HEK293 (cell line): ENCODE measurements at regions of chr6 and their contacts with region 1.

Region 1: DNA sequence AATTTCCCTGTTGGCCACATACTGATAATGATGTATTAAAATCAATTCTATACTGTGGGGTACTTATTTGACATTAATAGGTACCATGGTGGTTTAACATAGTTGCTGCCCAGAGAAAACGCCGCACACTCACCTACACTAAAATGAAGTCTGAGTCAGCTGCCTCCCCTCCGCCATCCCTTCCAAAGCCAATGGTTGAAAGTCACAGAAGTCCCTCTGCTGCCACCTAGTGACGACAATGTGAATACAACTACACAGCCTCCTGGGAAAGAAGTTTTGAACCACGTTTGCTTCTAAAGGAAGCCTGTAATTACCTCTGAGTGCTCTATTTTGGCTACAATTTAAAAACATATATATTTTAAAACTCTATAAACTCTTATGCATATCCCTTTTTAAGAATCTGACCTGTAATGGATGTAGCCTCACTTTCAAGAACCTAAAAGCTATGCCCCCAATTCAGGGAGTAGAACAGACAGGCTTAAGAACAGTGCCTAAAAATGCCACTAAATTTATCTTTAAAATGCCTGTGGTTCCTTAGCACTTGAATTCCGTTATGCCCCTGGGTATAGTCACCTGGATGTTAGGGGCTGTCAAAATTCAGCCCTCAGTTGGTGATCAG is 20.6 kb upstream of the ECI2 start:
- H3K4me3 ChIP-seq: no peak overlapping the region
- H3K27ac ChIP-seq: no peak overlapping the region
- H3K4me1 ChIP-seq: no peaks in the 10 kb centered on the region
- CTCF ChIP-seq: peak; percentile 68

Region 2: DNA sequence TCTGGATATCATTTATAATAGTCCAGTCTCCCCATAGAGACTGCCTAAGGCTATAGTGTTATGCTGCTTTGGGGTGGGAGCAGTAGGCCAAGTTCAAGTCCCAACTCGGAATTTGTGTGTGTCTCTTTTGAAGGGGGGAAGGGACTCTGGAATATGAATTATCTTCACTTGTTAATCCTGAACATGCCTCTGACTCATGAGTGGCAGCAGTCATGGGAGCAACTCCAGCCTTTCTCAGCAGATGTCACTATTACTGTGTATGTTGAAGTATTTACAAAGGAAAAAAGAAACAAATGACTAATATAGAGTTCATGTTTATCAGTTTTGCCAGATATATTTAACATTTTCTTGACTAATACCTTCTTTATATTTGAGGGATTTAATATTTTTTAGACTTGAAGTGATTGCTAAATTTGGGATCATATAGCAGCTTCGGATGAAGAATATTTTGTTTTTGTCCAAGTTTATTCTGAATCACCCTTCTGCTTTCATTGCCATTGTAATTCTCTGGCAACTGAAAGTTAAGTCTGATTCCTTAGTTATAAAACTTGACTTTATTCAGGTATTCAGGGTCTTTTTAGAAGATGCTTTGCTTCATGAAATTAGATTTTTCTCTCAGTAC is 100.4 kb before region 1 on chr6:
- CTCF ChIA-PET with region 1: interaction called, 59 read pairs
- POLR2A ChIA-PET with region 1: no interaction called
- H3K4me3 ChIP-seq: no peak overlapping the region
- H3K27ac ChIP-seq: no peak overlapping the region
- H3K4me1 ChIP-seq: peaks cover 7% of the 10 kb centered on the region; the same call in 1 of the 2 replicates
- CTCF ChIP-seq: 0 out of 2 replicates have a peak, but pooled peaks have one; percentile 39

Region 3: DNA sequence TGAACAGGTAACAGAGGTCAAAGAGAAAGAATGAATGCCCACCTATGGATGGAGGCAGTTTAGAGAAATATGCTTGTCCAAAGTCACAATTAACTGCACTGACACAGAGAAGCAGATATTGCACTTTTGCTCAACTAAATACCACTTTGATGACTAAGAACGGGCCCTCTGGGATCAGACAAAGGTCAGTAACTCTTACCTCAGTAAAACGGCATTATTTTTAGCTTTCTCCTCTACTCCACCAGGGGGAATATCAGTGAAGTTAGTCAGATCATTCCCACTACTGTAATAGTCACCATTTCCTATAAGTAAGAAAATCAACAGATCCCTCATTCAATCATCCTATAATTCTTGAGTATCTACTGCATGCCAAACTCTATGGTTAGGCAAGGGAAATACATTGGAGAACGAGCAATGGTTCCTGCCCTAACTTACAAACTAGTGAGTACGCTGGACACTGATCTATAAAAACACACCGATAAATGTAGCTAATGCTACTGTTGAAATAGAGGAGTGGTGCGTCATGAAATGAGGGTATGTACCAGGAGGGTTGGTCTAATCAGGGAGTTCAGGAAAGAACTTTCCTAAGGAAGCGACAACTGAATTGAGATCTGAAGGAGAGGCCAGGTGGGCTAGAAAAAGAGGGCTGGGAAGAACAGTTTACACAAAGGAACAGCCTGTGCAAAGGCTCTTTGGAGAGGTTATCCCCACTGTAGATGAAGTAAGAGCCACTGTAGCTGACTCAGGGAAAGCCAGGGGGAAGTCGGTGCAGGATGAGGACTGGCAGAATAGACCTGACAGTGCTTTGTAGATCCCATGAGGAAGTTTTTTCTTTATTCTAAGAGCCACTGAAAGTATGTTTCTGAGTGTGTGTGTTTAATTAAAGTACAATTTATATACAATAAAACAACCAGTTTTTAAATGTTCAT is 29.8 kb before region 1 on chr6:
- CTCF ChIA-PET with region 1: interaction called, 24 read pairs
- POLR2A ChIA-PET with region 1: no interaction called
- H3K4me3 ChIP-seq: no peak overlapping the region
- H3K27ac ChIP-seq: no peak overlapping the region
- H3K4me1 ChIP-seq: no peaks in the 10 kb centered on the region
- CTCF ChIP-seq: no peak

Region 4: DNA sequence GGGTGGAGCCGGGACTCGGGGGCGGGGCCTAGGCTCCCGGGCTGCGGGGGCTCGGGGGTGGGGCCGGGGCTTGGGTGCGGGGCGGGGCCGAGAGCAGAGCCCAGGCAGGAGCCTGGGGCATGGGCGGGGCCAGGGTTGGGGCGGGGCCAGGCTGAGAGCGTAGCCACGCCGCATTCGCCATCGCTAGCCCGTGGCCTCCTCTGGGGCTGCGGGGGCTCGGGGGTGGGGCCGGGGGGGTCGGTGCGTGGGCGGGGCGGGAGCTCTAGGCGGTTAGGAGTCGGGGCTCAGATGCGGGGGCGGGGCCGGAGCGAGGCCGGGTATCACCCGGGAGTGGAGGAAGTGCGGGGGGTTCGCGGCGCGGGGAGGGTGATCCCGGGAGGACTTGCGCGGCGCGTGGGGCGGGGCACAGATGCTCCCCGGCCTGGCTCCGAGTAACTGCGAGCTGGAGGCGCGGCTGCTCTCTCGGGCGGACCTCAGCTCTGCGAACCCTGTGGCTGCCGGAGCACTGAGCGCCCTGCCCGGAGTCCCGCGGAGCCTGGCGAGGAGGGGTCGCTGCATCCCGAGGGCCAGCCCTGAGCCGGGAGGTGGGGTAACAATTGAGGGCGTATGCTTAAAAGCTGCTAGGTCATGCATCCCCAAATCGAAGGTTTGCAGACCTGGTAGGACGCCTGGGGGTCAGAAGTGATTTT is 20.1 kb before region 1 on chr6:
- CTCF ChIA-PET with region 1: interaction called, 21 read pairs
- POLR2A ChIA-PET with region 1: interaction called, 8 read pairs
- H3K4me3 ChIP-seq: peak overlapping the region; percentile 64
- H3K27ac ChIP-seq: peak overlapping the region; percentile 55; the same call in 1 of the 2 replicates
- H3K4me1 ChIP-seq: peaks cover 5% of the 10 kb centered on the region
- CTCF ChIP-seq: peak; percentile 62

Region 5: DNA sequence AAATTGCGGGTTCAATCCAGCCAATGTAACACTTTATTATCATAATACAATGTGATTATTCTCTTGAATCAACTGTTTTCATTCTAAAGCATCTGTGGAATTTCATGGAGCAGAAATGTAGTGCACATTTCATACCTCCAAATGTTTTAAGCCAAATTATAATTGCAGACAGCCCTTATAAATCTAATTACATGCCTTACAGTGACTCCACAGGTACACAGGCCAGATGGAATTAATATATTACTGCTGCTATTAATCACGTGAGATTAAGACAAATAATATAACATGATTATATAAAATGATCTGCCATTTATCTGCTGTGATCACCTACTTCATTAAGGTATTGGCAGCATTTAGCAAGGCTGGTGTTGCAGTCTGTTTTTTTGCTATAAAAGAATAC is 10.9 kb before region 1 on chr6:
- CTCF ChIA-PET with region 1: interaction called, 12 read pairs
- POLR2A ChIA-PET with region 1: interaction called, 3 read pairs
- H3K4me3 ChIP-seq: no peak overlapping the region
- H3K27ac ChIP-seq: no peak overlapping the region
- H3K4me1 ChIP-seq: no peaks in the 10 kb centered on the region
- CTCF ChIP-seq: no peak

Region 6: DNA sequence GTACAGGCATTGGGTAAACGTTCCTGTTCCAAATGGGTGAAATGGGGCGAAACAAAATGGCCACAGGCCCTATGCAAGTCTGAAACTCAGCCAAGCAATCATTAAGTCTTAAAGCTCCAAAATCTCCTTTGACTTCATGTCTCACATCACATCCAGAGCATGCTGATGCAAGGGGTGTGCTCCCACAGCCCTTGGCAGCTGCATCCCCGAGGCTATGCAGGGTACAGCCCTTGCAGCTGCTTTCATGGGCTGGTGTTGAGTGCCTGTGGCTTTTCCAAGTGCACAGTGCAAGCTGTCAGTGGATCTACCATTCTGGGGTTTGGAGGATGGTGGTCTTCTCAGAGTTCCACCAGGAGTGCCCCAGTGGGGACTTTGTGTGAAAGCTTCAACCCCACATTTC is 350.3 kb after region 1 on chr6:
- CTCF ChIA-PET with region 1: no interaction called
- POLR2A ChIA-PET with region 1: no interaction called
- H3K4me3 ChIP-seq: no peak overlapping the region
- H3K27ac ChIP-seq: no peak overlapping the region
- H3K4me1 ChIP-seq: no peaks in the 10 kb centered on the region
- CTCF ChIP-seq: no peak